Activated naive CD8-positive, alpha-beta T cell treated with anti-CD3 and anti-CD28 coated beads, Interleukin-2, amount 10 ng/mL, durations not matched to agents 7 days and 5 days (primary cell): ENCODE measurements at regions of chr11 and their contacts with region 1.

Region 1: GRCh38 chr11:78188286-78189173 is at the starts of genes KCTD21 and USP35:
- DNase-seq: peak; percentile 92
- ATAC-seq: peak; percentile 93
- H3K4me3 Mint-ChIP-seq: peak within 1 kb of the TSS; percentile 100
- H3K27ac Mint-ChIP-seq: peak within 1 kb of the TSS; percentile 94
- H3K4me1 Mint-ChIP-seq: peaks cover 41% of the 10 kb centered on the region
- H3K27me3 Mint-ChIP-seq: no peaks in the 10 kb centered on the region
- total RNA-seq, gene KCTD21: 7.1 to 8.6 TPM
- total RNA-seq, gene USP35: 13.4 to 13.5 TPM

Region 2: DNA sequence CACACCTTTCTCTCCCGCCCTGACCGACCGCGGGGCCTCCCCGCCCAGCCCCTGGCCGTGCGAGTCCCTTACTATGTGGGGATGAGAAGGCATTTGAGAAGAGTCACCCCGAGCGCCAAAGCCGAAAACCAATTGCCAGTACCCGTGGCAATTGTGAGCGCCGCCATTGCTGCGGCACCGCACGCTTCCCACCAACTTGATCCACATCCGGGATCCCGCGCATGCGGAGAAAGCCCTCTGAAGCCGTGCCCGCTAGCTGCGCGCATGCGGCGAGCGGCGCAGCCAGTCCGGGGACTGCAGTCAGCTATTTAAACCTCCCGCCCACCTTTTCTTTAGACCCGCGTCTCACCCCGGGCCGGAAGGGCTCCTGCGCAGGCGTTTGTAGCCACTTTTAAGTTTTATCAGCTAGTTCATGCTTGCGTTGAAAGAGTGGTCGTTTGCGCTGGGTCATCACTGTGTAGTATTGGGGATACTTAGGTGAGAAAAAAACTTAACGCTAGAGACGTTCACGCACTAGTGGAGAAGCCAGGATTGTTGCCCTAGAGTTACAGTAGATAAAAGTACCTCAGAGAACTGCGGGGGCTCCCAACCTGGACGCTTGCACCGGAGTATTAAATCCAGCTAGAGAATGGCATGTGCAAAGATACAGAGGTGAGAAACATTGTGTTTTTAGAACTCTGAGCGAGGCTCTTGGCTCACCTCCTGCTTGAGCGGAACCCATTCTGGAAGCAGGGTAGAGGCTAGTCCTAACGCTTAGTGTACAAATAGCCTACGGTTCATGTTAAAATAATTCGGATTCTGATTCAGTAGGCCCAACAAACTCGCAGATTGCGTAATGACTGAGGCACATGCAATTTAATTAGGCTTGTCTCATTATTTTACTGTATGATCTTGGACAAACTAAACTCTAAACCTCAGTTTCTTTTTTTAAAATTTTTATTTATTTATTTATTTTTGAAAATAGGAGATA is 48.8 kb before region 1 on chr11 and contains the start of gene ALG8:
- POLR2A ChIA-PET with region 1: interaction called, 23 read pairs
- DNase-seq: peak; percentile 95
- ATAC-seq: peak; percentile 98
- H3K4me3 Mint-ChIP-seq: peak within 1 kb of the TSS; percentile 93
- H3K27ac Mint-ChIP-seq: peak within 1 kb of the TSS; percentile 92
- H3K4me1 Mint-ChIP-seq: peaks cover 44% of the 10 kb centered on the region
- H3K27me3 Mint-ChIP-seq: no peaks in the 10 kb centered on the region
- total RNA-seq, gene ALG8: 36.7 to 44.3 TPM

Region 3: DNA sequence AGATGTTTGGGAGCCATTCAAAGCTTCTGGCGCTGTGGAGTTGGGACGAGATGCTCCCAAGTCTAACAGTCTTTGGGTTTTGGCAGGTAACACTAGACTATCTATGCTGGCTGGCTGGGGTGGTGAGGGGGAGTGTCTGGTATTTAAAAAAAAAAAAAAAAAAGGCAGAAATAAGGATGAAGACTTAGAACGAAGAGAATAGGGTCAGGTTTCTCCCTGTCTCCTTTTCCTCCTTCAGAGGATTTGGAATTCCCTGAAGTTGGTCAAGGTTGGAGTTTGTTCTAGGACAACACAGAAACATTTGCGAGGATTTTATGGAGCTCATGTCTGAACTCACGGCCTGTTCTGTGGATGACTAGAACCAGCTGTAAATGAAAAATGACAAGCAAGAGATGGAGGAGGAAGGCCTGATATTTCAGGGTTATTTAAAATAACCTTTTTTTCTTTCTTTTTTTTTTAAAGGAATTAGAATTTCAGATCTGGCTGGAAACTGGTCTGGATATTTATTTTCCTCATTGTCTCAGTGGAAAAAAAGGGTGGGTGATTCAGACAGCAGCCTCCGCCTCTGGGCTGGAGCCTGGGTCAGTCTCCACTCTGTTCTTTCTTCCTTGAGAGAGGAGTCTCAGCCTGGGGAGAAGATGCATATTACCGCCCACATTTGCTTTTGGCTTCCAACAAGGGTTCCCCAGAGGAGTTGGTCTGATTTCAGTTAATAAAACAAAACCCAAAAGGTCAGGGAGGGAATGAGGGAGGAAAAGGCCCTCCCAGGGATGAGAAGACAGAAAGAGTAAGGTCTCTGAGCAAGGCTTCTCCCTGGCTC is 80.3 kb after region 1 on chr11:
- POLR2A ChIA-PET with region 1: no interaction called
- DNase-seq: no peak
- ATAC-seq: no peak
- H3K4me3 Mint-ChIP-seq: no peak overlapping the region
- H3K27ac Mint-ChIP-seq: no peak overlapping the region
- H3K4me1 Mint-ChIP-seq: no peaks in the 10 kb centered on the region
- H3K27me3 Mint-ChIP-seq: no peaks in the 10 kb centered on the region